Activated CD8-positive, alpha-beta T cell treated with anti-CD3 and anti-CD28 coated beads for 36 hours (primary cell): ENCODE measurements at regions of chr6 and their contacts with region 1.

Region 1: DNA sequence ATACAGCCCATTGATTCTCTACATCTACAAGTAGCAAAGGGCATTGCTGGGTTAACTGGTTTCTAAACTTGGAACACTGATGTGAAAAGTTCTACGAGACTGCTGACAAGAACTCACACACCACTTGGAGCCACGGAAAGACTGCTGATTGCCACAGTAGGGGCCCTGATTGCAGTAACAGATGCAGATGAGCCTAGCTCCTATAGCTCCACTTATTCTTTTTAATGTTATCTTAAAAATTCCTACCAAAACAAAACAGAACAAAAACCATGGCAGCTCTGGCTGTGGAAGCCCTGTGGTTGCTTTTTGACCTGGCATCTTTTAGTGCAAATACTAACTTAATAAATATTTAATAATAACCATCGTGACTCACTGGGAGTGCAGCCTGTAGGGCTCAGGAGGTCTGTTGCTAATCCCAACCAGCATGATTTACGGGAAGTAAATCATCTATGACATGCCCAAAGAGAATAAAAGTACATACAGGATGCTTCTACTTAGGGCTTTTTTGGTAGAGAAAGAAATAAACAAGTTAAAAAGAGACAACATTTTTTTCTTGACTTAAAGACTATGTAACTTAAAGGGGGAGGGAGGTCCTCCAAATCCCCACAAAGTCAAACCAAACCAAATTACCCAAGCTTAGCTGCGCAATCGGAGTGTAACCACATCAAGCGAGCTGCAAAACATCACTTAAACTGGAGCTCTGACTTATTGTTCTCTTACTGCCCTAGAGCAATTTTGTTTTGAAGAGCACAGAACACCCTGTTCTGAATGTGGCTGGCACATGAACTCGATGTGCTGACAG is 87.2 kb downstream of the FKBP5 start:
- DNase-seq: peak; percentile 76
- ATAC-seq: peak; percentile 71
- H3K4me3 Mint-ChIP-seq: peak overlapping the region; percentile 60
- H3K27ac Mint-ChIP-seq: peak overlapping the region; percentile 70
- H3K4me1 Mint-ChIP-seq: peaks cover 70% of the 10 kb centered on the region
- H3K27me3 Mint-ChIP-seq: no peaks in the 10 kb centered on the region
- CTCF ChIP-seq: no peak

Region 2: DNA sequence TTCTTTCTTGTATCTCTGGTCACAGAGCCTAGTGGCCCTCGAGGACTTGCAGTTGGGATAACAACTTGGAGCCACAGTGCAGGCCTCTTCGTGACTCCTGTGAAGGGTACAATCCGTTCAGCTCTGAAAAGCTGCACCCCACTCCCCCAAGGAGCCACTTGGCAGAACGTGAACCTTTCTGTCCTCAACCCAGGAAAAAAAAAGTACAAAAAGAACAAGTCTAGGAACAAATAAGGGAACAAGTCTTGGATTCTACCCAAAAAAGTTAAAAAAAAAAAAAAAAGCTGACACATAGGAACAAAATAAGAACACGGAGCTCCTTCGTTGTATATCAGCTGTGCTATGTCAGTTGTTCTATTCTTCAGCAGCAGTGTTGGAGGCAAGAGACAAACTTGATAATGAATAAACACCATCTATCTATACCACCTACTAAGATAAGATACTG is 10.9 kb before region 1 on chr6:
- CTCF ChIA-PET with region 1: interaction called, 23 read pairs
- POLR2A ChIA-PET with region 1: interaction called, 13 read pairs
- intact Hi-C with region 1: no loop called
- DNase-seq: no peak
- ATAC-seq: no peak
- H3K4me3 Mint-ChIP-seq: no peak overlapping the region
- H3K27ac Mint-ChIP-seq: peak overlapping the region; percentile 49
- H3K4me1 Mint-ChIP-seq: peaks cover 79% of the 10 kb centered on the region
- H3K27me3 Mint-ChIP-seq: no peaks in the 10 kb centered on the region
- CTCF ChIP-seq: no peak

Region 3: GRCh38 chr6:35669451-35670045 is 68.0 kb after region 1 on chr6:
- CTCF ChIA-PET with region 1: interaction called, 3 read pairs
- POLR2A ChIA-PET with region 1: interaction called, 3 read pairs
- intact Hi-C with region 1: loop called (anchors 5 kb)
- DNase-seq: no peak
- ATAC-seq: peak; percentile 54
- H3K4me3 Mint-ChIP-seq: peak overlapping the region; percentile 56
- H3K27ac Mint-ChIP-seq: peak overlapping the region; percentile 91
- H3K4me1 Mint-ChIP-seq: peaks cover 40% of the 10 kb centered on the region
- H3K27me3 Mint-ChIP-seq: no peaks in the 10 kb centered on the region
- CTCF ChIP-seq: no peak

Region 4: DNA sequence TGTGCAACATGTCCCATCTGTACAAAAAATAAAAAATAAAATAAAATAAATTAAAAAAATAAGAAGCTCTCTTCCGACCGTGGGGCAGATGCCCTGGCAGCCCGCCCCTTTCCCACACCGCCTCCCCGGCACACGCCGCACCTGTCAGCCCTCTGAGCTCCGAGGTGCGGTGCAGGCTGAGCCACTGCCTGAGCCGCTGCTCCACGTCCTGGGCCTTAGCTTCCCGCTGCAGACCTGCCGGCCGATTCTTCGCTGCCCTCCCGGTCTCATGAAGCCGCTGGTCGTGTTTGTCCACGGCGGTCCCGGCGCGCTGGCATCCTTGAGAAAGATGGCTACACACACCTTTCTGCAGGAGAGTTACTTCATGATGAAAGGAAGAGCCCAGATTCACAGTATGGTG is 164.2 kb after region 1 on chr6:
- CTCF ChIA-PET with region 1: no interaction called
- POLR2A ChIA-PET with region 1: no interaction called
- intact Hi-C with region 1: no loop called
- DNase-seq: no peak
- ATAC-seq: no peak
- H3K4me3 Mint-ChIP-seq: no peak overlapping the region
- H3K27ac Mint-ChIP-seq: no peak overlapping the region
- H3K4me1 Mint-ChIP-seq: no peaks in the 10 kb centered on the region
- H3K27me3 Mint-ChIP-seq: peaks cover 28% of the 10 kb centered on the region
- CTCF ChIP-seq: no peak